Colonic mucosa (tissue), 4 donors: ENCODE measurements at regions of chr6 and their contacts with region 1.

Region 1: GRCh38 chr6:127342946-127343808 is at the start of gene ECHDC1:
- DNase-seq: peak; percentile 70
- H3K4me3 ChIP-seq: peak within 1 kb of the TSS; percentile 52
- H3K27ac ChIP-seq: peak within 1 kb of the TSS; percentile 86
- H3K4me1 ChIP-seq: peaks cover 9% of the 10 kb centered on the region
- H3K27me3 ChIP-seq: no peaks in the 10 kb centered on the region
- CTCF ChIP-seq: no peak
- total RNA-seq, gene ECHDC1: 56.1 to 111 TPM

Region 2: DNA sequence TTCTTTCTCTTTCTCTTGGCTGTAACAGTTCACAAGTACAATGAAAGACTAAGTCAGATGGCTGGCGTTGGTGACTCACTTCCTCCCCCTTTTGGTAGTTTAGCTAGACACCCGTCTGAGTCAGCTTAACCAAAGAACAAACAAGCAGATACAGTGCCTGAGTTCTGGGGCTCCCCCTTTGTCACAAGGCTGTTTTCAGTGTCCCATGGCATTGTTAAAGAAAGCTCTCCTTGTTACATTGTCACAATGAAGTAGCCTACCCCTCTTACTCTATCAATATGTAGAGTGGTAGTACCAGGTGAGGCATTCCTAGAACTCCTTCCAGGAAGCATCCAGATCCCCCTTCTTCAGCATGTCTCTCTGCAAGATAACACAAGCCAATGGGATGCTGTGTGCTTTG is 77.4 kb after region 1 on chr6:
- intact Hi-C with region 1: loop called (anchors 5 kb)
- DNase-seq: peak; percentile 42
- H3K4me3 ChIP-seq: no peak overlapping the region
- H3K27ac ChIP-seq: no peak overlapping the region
- H3K4me1 ChIP-seq: no peaks in the 10 kb centered on the region
- H3K27me3 ChIP-seq: no peaks in the 10 kb centered on the region
- CTCF ChIP-seq: peak; percentile 62